ENCODE measurements at regions of chr5 and their contacts with region 1.

Region 1: GRCh38 chr5:97231025-97231636 is 48.1 kb upstream of the RIOK2 start:
- DNase-seq: no peak

Region 2: GRCh38 chr5:96963267-96963666 is 267.9 kb before region 1 on chr5:
- intact Hi-C with region 1: no loop called
- DNase-seq: no peak

Region 3: DNA sequence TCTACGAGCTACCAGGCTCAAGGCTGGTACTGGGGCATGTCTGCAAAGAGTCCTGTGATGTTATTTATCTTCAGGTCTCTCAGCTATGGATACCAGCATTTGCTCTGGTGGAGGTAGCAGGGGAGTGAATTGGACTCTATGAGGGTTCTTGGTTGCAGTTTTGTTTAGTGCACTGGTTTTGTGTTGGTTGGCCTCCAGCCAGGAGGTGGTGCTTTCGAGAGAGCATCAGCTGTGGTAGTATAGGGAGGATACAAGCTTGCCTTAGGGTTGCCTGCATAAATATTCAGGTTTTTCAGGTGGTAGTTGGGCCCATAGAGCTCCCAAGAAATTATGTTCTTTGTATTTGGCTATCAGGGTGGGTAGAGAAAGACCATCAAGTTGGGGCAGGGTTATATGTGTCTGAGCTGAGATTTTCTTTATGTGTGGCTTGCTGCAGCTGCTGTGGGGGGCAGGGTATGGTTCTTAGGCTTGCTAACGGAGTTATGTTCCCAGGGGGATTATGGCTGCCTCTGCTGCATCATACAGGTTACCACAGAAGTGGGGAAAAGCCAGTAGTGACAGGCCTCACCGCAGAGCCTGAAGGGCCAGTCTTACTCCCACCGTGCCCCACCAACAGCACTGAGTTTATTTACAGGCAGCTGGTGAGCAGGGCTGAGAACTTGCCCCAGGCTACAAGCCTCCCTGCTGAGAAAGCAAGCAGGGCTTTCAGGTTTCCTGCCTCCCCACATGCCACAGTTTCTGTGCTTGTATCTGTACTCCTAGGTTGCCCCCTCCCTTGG is 38.4 kb before region 1 on chr5:
- intact Hi-C with region 1: no loop called
- DNase-seq: no peak

Region 4: GRCh38 chr5:97297063-97297703 is 66.1 kb after region 1 on chr5:
- intact Hi-C with region 1: no loop called
- DNase-seq: no peak

Region 5: GRCh38 chr5:97534166-97534565 is 303.0 kb after region 1 on chr5:
- intact Hi-C with region 1: loop called (anchors 5 kb)
- DNase-seq: no peak

Measured in cardiac septum (tissue), 1 donor.